ENCODE measurements at regions of chr12 and their contacts with region 1.

Region 1: DNA sequence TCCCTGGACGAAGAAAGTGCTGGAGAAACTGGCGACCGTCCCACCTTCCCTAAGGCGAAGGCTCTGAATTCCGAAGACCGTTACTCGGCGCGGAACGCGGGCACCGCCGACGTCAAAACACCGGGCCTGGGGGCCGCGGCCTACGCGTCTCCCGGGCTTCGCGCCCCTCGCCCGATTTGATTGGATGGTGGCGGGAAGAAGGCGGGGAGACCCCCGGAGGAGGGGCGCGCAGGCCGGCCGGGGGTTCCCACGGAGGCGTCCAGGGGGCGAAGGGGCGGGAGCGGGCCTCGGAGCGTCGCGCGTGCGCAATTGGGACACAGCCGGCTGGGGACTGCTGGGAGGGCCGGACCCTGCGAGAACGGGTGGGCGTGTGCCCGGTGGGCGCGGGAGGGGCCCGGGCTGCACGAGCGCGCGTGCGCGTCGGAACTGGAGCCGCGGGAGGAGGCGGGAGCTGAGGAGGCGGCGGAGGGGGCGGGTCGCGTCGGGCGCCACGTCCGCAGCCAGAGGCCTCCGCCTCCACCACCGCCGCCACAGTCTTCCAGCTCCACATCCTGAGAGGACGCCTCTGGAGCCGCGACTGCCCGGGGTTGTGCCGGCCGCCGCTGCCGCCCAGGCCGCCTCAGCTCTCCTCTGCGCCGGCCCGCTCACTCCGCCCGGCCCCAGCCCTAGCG is at the start of gene TMEM263:
- DNase-seq: peak; percentile 91
- ATAC-seq: peak; percentile 86
- H3K4me3 Mint-ChIP-seq: peak within 1 kb of the TSS; percentile 96
- H3K27ac Mint-ChIP-seq: peak within 1 kb of the TSS; percentile 84
- H3K4me1 Mint-ChIP-seq: peaks cover 23% of the 10 kb centered on the region
- H3K27me3 Mint-ChIP-seq: no peaks in the 10 kb centered on the region
- CTCF ChIP-seq: no peak
- total RNA-seq, gene TMEM263: 10.5 and 15.1 TPM in 2 replicates

Region 2: DNA sequence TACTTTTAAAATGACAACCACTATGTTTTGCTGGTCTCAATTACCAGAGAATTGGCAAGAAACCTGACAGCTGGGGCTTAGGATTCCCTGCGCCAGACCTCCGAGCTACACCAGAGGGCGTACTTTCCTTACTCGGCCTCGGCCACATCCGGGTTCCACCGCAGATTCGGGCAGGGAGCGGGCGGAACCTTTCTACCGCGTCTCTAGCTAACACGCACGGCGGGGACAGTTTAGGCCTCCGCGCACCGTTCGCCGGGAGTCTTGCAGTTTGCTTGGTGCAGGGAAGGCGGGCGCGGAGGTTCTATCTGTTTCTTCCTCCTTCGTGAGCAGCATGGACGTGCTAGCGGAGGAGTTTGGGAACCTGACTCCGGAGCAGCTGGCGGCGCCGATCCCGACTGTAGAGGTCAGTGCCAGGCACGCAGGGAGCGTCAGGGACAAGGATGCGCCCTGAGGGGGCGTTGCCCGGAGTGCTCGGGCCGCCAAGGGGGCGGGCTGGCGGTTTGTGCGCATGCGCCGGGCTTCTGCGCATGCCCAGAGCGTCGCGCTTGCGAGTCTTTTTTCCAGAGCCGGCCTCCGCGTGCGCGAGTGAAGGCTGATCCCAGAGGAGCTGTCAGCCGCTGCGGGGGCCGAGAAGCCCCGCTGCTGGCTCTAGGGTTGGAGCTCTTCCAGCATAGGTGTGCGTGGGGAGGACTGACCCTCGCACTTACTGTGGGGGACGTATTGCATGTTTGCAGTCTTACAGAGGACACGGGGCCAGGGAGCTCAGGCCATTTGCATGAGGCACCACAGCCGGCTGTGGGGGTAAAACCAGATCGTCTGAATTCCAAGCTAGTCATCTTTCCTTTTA is 597.7 kb before region 1 on chr12 and contains the start of gene POLR3B:
- CTCF ChIA-PET with region 1: no interaction called
- POLR2A ChIA-PET with region 1: interaction called, 7 read pairs
- intact Hi-C with region 1: loop called (anchors 1 kb)
- DNase-seq: peak; percentile 96
- ATAC-seq: peak; percentile 92
- H3K4me3 Mint-ChIP-seq: peak within 1 kb of the TSS; percentile 95
- H3K27ac Mint-ChIP-seq: peak within 1 kb of the TSS; percentile 92
- H3K4me1 Mint-ChIP-seq: peaks cover 16% of the 10 kb centered on the region
- H3K27me3 Mint-ChIP-seq: no peaks in the 10 kb centered on the region
- CTCF ChIP-seq: peak; percentile 49
- total RNA-seq, gene POLR3B: 7.3 and 8.0 TPM in 2 replicates

Region 3: GRCh38 chr12:106910202-106910601 is 45.3 kb before region 1 on chr12:
- CTCF ChIA-PET with region 1: interaction called, 3 read pairs
- POLR2A ChIA-PET with region 1: interaction called, 4 read pairs
- intact Hi-C with region 1: loop called (anchors 1 kb)
- DNase-seq: no peak
- ATAC-seq: peak; percentile 84
- H3K4me3 Mint-ChIP-seq: peak overlapping the region; percentile 9
- H3K27ac Mint-ChIP-seq: no peak overlapping the region
- H3K4me1 Mint-ChIP-seq: peaks cover 14% of the 10 kb centered on the region
- H3K27me3 Mint-ChIP-seq: peaks cover 79% of the 10 kb centered on the region
- CTCF ChIP-seq: no peak

Region 4: GRCh38 chr12:106973545-106973944 is 18.0 kb after region 1 on chr12:
- CTCF ChIA-PET with region 1: no interaction called
- POLR2A ChIA-PET with region 1: interaction called, 4 read pairs
- intact Hi-C with region 1: loop called (anchors 2 kb)
- DNase-seq: no peak
- ATAC-seq: no peak
- H3K4me3 Mint-ChIP-seq: no peak overlapping the region
- H3K27ac Mint-ChIP-seq: no peak overlapping the region
- H3K4me1 Mint-ChIP-seq: peaks cover 16% of the 10 kb centered on the region
- H3K27me3 Mint-ChIP-seq: no peaks in the 10 kb centered on the region
- CTCF ChIP-seq: no peak

Region 5: GRCh38 chr12:106986625-106987430 is 31.3 kb after region 1 on chr12 and contains the start of gene MTERF2:
- CTCF ChIA-PET with region 1: no interaction called
- POLR2A ChIA-PET with region 1: interaction called, 9 read pairs
- intact Hi-C with region 1: loop called (anchors 1 kb)
- DNase-seq: peak; percentile 61
- ATAC-seq: peak; percentile 99
- H3K4me3 Mint-ChIP-seq: peak within 1 kb of the TSS; percentile 95
- H3K27ac Mint-ChIP-seq: peak within 1 kb of the TSS; percentile 70
- H3K4me1 Mint-ChIP-seq: peaks cover 39% of the 10 kb centered on the region
- H3K27me3 Mint-ChIP-seq: no peaks in the 10 kb centered on the region
- CTCF ChIP-seq: no peak
- total RNA-seq, gene MTERF2: 8.3 and 9.4 TPM in 2 replicates

Region 6: DNA sequence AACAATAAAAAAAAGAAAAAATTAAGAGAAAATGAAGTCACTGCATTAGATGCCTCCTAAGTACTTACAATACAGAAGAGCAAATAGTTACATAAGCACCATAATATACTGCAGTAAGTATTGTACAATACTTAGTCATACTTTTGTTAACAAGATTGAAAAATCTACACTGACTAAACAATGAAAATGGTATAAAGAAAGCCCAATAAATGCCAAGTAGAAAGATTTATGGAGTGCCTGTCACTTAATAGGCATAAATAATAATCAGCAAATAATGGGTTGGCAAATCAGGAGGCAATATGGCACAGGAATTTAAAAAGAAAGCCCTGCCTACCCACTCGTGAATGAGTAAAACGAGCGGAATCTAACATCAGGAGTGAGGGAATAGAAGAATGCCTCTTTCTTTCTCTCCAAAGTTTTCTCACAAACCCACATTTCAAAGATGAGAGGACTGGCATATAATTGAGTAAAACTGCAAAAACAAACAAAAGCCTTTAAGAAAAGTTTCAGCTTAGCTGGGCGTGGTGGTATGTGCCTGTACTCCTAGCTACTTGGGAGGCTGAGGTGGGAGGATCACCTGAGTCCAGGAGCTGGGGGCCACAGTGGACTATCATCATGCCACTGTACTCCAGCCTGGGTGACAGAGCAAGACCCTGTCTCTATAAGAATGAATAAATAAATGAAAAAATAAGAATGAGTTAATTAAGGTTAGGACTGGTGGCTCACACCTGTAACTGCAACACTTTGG is 101.7 kb after region 1 on chr12:
- CTCF ChIA-PET with region 1: no interaction called
- POLR2A ChIA-PET with region 1: no interaction called
- intact Hi-C with region 1: no loop called
- DNase-seq: no peak
- ATAC-seq: no peak
- H3K4me3 Mint-ChIP-seq: no peak overlapping the region
- H3K27ac Mint-ChIP-seq: no peak overlapping the region
- H3K4me1 Mint-ChIP-seq: no peaks in the 10 kb centered on the region
- H3K27me3 Mint-ChIP-seq: no peaks in the 10 kb centered on the region
- CTCF ChIP-seq: no peak

Region 7: DNA sequence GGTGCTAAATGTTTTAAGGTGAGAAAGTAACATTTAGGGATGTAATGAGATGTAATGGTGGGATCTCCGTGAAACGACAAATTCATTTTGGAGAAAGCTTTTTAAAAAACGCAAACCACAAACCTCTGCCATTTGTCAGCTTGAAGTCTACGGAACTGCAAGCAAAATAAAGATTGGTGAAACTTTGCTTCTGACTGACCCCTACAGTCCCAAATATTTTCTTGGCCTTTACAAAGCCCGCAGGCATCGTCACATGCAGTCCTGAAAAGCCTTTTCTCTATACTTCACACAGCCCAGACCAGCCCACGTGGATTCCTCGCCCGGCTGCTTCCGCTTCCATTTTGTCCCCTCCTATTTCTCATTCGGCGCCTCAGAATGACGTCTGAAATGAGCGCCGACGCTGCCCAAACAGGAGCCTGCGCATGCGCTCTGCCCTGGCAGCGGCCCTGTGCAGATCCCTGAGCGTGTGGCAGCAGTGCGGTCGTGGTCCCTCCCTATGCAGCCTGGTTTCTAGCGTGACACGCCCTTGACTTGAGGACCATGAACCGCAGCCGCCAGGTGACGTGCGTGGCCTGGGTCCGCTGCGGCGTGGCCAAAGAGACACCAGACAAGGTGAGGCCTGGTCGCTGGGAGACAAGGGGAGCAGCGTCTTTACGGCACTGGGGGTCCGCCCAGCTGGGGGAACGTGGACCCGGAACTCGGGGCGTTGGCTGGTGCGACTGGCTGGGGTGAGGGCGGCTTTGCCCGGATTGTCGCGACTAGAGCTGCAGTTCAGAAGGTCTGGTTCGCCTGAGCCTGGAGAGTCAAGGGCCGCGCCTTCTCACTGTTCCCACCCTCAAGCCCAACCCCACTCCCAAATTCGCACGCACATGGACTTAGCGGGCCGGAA is 730.1 kb after region 1 on chr12 and contains the start of gene PWP1:
- CTCF ChIA-PET with region 1: no interaction called
- POLR2A ChIA-PET with region 1: no interaction called
- intact Hi-C with region 1: loop called (anchors 10 kb)
- DNase-seq: peak; percentile 93
- ATAC-seq: peak; percentile 90
- H3K4me3 Mint-ChIP-seq: peak within 1 kb of the TSS; percentile 96
- H3K27ac Mint-ChIP-seq: peak within 1 kb of the TSS; percentile 97
- H3K4me1 Mint-ChIP-seq: peaks cover 23% of the 10 kb centered on the region
- H3K27me3 Mint-ChIP-seq: no peaks in the 10 kb centered on the region
- CTCF ChIP-seq: no peak
- total RNA-seq, gene PWP1: 49.4 and 53.5 TPM in 2 replicates